Activated CD8-positive, alpha-beta T cell treated with anti-CD3 and anti-CD28 coated beads for 36 hours (primary cell): ENCODE measurements at regions of chr1 and their contacts with region 1.

Region 1: DNA sequence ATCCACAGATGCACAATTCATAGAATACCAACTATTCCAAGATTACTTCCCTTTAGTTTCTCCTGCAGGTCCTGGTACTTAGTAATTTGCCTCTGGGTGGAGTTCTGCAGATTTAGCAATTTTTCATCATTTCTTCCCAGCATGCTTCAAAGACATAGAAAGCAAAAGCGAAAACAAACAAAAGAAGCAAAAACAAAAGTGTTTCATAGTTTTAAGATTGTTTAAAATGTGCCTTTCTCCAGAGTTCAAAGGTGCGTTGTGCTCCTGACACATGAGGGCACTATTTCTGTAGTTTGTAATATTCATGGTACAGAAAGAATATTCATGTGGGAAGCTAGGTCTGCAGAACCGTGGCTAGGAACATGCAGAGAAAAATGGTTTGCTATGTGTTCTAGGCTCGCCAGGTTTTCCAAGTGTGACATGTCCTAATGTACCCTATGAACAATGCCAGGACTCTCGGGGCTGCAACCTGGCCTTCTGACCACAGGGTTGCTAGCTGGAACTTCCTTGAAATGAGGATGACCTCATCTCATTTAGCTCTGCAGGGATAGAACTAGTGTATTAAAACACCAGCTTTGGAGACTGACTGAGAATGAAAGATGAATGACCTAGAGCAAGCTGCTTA is 30.0 kb upstream of the RCSD1 start:
- DNase-seq: peak; percentile 66
- ATAC-seq: peak; percentile 77
- H3K4me3 Mint-ChIP-seq: peak overlapping the region; percentile 54
- H3K27ac Mint-ChIP-seq: peak overlapping the region; percentile 77
- H3K4me1 Mint-ChIP-seq: peaks cover 41% of the 10 kb centered on the region
- H3K27me3 Mint-ChIP-seq: no peaks in the 10 kb centered on the region
- CTCF ChIP-seq: peak; percentile 62

Region 2: GRCh38 chr1:167342846-167343245 is 257.2 kb before region 1 on chr1:
- CTCF ChIA-PET with region 1: no interaction called
- POLR2A ChIA-PET with region 1: no interaction called
- intact Hi-C with region 1: no loop called
- DNase-seq: no peak
- ATAC-seq: no peak
- H3K4me3 Mint-ChIP-seq: no peak overlapping the region
- H3K27ac Mint-ChIP-seq: no peak overlapping the region
- H3K4me1 Mint-ChIP-seq: no peaks in the 10 kb centered on the region
- H3K27me3 Mint-ChIP-seq: no peaks in the 10 kb centered on the region
- CTCF ChIP-seq: peak; percentile 23

Region 3: GRCh38 chr1:167474191-167474716 is 125.8 kb before region 1 on chr1:
- CTCF ChIA-PET with region 1: no interaction called
- POLR2A ChIA-PET with region 1: no interaction called
- intact Hi-C with region 1: no loop called
- DNase-seq: peak; percentile 72
- ATAC-seq: peak; percentile 58
- H3K4me3 Mint-ChIP-seq: peak overlapping the region; percentile 59
- H3K27ac Mint-ChIP-seq: peak overlapping the region; percentile 86
- H3K4me1 Mint-ChIP-seq: peaks cover 88% of the 10 kb centered on the region
- H3K27me3 Mint-ChIP-seq: no peaks in the 10 kb centered on the region
- CTCF ChIP-seq: no peak

Region 4: GRCh38 chr1:167553136-167554027 is 46.7 kb before region 1 on chr1 and contains the start of gene CREG1:
- CTCF ChIA-PET with region 1: interaction called, 11 read pairs
- POLR2A ChIA-PET with region 1: interaction called, 3 read pairs
- intact Hi-C with region 1: no loop called
- DNase-seq: peak; percentile 92
- ATAC-seq: peak; percentile 100
- H3K4me3 Mint-ChIP-seq: peak within 1 kb of the TSS; percentile 86
- H3K27ac Mint-ChIP-seq: peak within 1 kb of the TSS; percentile 23
- H3K4me1 Mint-ChIP-seq: peaks cover 32% of the 10 kb centered on the region
- H3K27me3 Mint-ChIP-seq: no peaks in the 10 kb centered on the region
- CTCF ChIP-seq: no peak
- total RNA-seq, gene CREG1: 9.7 to 10.0 TPM

Region 5: GRCh38 chr1:167617153-167618147 is 17.4 kb after region 1 on chr1:
- CTCF ChIA-PET with region 1: interaction called, 22 read pairs
- POLR2A ChIA-PET with region 1: interaction called, 3 read pairs
- intact Hi-C with region 1: no loop called
- DNase-seq: peak; percentile 35
- ATAC-seq: peak; percentile 68
- H3K4me3 Mint-ChIP-seq: peak overlapping the region; percentile 48
- H3K27ac Mint-ChIP-seq: peak overlapping the region; percentile 86
- H3K4me1 Mint-ChIP-seq: peaks cover 44% of the 10 kb centered on the region
- H3K27me3 Mint-ChIP-seq: no peaks in the 10 kb centered on the region
- CTCF ChIP-seq: no peak

Region 6: DNA sequence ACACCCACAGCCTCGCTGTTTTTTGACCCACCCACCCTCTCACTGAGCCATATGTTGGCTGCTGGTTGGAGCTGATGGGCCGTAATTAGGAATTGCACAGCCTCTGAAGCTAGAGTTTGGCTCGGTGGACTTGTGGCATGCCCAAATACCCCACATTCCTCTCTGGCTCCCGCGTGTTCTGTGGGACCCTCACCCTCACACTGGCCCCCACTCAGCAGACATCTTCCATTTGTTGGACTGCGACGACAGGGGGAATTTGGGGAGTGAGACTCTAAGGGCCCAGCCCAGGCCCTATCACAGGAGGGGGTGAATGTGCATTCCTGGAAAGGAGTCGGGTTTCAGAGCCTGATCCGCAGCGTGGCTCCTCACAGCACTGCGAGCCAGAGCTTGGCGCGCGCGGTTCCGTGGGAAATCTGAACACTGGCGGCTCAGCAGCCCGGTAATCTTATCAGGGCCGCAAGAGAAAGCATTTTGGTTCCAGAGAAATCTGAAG is 35.1 kb after region 1 on chr1:
- CTCF ChIA-PET with region 1: interaction called, 64 read pairs
- POLR2A ChIA-PET with region 1: interaction called, 40 read pairs
- intact Hi-C with region 1: loop called (anchors 5 kb)
- DNase-seq: no peak
- ATAC-seq: no peak
- H3K4me3 Mint-ChIP-seq: no peak overlapping the region
- H3K27ac Mint-ChIP-seq: peak overlapping the region; percentile 98
- H3K4me1 Mint-ChIP-seq: peaks cover 76% of the 10 kb centered on the region
- H3K27me3 Mint-ChIP-seq: no peaks in the 10 kb centered on the region
- CTCF ChIP-seq: no peak

Region 7: GRCh38 chr1:167676205-167676915 is 76.3 kb after region 1 on chr1:
- CTCF ChIA-PET with region 1: interaction called, 26 read pairs
- POLR2A ChIA-PET with region 1: interaction called, 3 read pairs
- intact Hi-C with region 1: no loop called
- DNase-seq: peak; percentile 19
- ATAC-seq: peak; percentile 67
- H3K4me3 Mint-ChIP-seq: no peak overlapping the region
- H3K27ac Mint-ChIP-seq: peak overlapping the region; percentile 53
- H3K4me1 Mint-ChIP-seq: peaks cover 32% of the 10 kb centered on the region
- H3K27me3 Mint-ChIP-seq: no peaks in the 10 kb centered on the region
- CTCF ChIP-seq: no peak